Sigmoid colon (tissue), 7 donors: ENCODE measurements at regions of chr6 and their contacts with region 1.

Region 1: DNA sequence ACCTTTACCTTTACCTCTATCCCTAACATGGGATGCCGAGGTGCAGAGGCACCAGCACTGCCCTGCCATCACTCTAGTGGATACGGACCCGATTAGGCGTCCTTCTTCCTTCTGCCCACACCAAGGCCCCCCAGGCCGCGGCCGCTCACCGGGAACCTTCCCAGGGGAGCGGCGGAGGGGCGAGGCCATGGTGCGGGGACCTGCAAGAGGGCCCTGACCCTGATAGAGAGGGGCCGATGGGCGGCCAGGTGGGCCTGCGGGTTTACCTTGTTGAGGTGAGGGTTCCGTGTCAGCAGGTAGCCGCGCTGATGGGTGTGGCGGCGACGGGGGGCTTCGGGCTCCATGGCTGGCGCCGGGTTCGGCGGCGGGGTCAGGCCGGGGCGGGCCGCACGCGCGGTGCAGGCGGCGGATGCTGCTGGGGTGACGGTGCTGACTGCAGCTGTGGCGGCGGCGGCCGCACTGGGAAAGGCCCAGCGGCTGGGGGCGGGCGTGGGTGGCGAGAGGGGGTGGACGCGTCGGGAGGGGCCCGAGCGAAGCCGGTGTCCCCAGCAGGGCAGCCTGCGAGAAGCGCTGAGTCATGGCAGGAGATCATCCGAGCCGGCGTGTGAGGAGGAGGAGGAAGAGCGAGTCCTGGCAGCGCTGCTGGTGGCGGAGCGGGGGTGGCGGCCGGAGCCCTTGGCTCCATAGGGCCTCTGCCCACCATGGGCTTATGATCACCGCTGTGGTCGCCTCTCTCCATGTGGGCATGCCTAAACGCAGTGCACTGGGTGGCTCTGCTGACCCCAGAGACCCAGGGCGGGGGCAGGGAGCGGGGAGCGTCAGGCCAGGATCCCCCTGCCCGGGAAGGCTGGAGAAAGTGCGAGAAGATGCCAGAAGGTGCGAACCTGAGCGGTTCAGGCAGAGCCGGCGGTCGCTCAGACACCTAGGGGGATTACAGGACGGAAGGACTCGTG is at the start of gene ME1:
- DNase-seq: peak; percentile 90
- H3K4me3 ChIP-seq: peak within 1 kb of the TSS; percentile 52 to 84 (median 74)
- H3K27ac ChIP-seq: peak within 1 kb of the TSS; percentile 78 to 82 (median 80)
- H3K4me1 ChIP-seq: peaks cover 0 to 19% (median 14%) of the 10 kb centered on the region in 4 donors
- H3K27me3 ChIP-seq: no peaks in the 10 kb centered on the region
- CTCF ChIP-seq: no peak
- EP300 ChIP-seq: no peak
- POLR2A ChIP-seq: no peak
- total RNA-seq, gene ME1: 11.3 to 18.5 (median 16.3) TPM

Region 2: DNA sequence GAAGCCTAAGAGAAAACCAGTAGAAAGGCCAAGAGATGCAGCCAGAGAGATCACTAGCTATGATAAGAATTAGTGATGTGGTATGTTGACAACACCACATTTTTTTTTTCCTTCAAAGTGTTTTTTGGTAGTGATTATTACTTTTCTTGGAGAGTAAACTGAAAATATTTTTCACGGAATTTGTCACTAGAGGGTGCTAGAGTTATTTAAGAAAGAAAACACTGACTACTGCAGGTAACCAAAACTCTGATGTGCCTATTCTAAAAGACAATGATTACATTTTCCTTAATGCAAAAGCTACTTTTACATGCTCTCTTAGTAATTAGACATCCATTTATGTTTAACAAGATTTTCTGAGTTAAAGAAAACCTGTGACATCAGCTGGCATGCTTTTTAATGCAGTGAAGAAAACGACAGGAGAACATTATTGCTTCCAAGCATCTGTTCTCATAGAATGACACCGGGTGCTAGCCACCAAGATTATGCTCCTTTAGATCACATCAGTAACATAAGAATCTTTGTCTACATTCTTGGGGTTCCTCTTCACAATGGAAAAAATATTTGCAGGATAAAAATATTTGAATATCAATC is 208.9 kb before region 1 on chr6:
- intact Hi-C with region 1: loop called (anchors 10 kb)
- DNase-seq: no peak
- H3K4me3 ChIP-seq: no peak overlapping the region
- H3K27ac ChIP-seq: no peak overlapping the region
- H3K4me1 ChIP-seq: no peaks in the 10 kb centered on the region
- H3K27me3 ChIP-seq: no peaks in the 10 kb centered on the region
- CTCF ChIP-seq: peak in 2 of 4 experiments; percentile 11 to 48
- EP300 ChIP-seq: no peak
- POLR2A ChIP-seq: no peak

Region 3: DNA sequence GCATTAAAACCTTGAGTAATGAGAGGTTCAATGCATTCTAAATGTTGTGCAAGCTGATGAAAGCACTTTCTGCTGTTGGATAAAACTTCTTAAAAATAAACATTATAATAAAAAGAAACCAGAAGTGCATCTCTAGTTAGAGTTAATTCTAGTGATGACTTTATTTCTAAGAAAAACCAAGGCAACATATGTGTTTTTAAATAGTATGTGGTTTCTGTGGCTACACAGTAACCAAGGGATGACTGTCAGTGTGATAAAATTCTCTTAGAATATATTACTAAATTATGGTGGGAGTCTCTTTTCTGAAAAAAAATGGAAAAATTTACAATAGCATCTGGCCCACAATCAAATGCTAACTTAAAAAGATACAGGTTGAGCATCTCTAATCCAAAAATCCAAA is 117.0 kb before region 1 on chr6:
- intact Hi-C with region 1: no loop called
- DNase-seq: no peak
- H3K4me3 ChIP-seq: no peak overlapping the region
- H3K27ac ChIP-seq: no peak overlapping the region
- H3K4me1 ChIP-seq: no peaks in the 10 kb centered on the region
- H3K27me3 ChIP-seq: no peaks in the 10 kb centered on the region
- CTCF ChIP-seq: no peak
- EP300 ChIP-seq: no peak
- POLR2A ChIP-seq: no peak